IMR-90 (cell line): ENCODE measurements at regions of chr1 and their contacts with region 1.

Region 1: DNA sequence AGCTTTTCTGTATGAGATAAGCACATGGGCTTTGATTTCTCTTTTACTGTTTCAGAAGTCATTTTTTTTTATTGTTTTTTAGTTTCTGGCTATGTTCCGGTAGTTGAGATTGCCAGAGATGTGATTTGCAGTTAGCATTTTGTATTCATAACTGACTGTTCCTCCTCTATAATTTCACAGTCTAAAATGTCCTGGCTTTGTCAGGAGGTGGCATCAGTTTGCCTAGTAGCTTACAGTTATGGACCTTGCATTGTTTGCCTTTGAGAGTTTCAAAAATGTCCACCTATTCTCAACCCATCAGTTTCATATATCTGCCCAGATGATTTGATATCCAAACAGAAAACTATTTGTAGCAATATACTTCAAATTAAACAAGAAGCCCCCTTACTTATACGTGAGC is 39.5 kb upstream of the ST6GALNAC3 start:
- DNase-seq: peak; percentile 4
- ATAC-seq: peak; percentile 64
- H3K4me3 ChIP-seq: no peak overlapping the region
- H3K27ac ChIP-seq: no peak overlapping the region
- H3K4me1 ChIP-seq: no peaks in the 10 kb centered on the region
- H3K27me3 ChIP-seq: peaks cover 2% of the 10 kb centered on the region; the same call in 1 of the 2 replicates
- CTCF ChIP-seq: peak; percentile 31; the same call in 1 of the 2 replicates
- POLR2A ChIP-seq: no peak
- RAD21 ChIP-seq: peak; percentile 46

Region 2: GRCh38 chr1:76147917-76148316 is 112.9 kb after region 1 on chr1:
- CTCF ChIA-PET with region 1: no interaction called
- POLR2A ChIA-PET with region 1: no interaction called
- dilution Hi-C with region 1: no loop called
- in situ Hi-C with region 1: no loop called
- intact Hi-C with region 1: loop called (anchors 5 kb)
- DNase-seq: no peak
- ATAC-seq: no peak
- H3K4me3 ChIP-seq: no peak overlapping the region
- H3K27ac ChIP-seq: no peak overlapping the region
- H3K4me1 ChIP-seq: no peaks in the 10 kb centered on the region
- H3K27me3 ChIP-seq: no peaks in the 10 kb centered on the region; the same call in 1 of the 2 replicates
- CTCF ChIP-seq: no peak
- POLR2A ChIP-seq: no peak
- RAD21 ChIP-seq: no peak